Sigmoid colon (tissue), 7 donors: ENCODE measurements at regions of chr5 and their contacts with region 1.

Region 1: GRCh38 chr5:116507051-116507537 is 67.5 kb downstream of the SEMA6A start:
- DNase-seq: peak; percentile 80
- H3K4me3 ChIP-seq: no peak overlapping the region
- H3K27ac ChIP-seq: peak overlapping the region; percentile 29 to 77 (median 57)
- H3K4me1 ChIP-seq: peaks cover 0 to 98% (median 85%) of the 10 kb centered on the region in 4 donors
- H3K27me3 ChIP-seq: no peaks in the 10 kb centered on the region
- CTCF ChIP-seq: no peak
- EP300 ChIP-seq: peak; percentile 38 to 79 (median 56)
- POLR2A ChIP-seq: no peak

Region 2: DNA sequence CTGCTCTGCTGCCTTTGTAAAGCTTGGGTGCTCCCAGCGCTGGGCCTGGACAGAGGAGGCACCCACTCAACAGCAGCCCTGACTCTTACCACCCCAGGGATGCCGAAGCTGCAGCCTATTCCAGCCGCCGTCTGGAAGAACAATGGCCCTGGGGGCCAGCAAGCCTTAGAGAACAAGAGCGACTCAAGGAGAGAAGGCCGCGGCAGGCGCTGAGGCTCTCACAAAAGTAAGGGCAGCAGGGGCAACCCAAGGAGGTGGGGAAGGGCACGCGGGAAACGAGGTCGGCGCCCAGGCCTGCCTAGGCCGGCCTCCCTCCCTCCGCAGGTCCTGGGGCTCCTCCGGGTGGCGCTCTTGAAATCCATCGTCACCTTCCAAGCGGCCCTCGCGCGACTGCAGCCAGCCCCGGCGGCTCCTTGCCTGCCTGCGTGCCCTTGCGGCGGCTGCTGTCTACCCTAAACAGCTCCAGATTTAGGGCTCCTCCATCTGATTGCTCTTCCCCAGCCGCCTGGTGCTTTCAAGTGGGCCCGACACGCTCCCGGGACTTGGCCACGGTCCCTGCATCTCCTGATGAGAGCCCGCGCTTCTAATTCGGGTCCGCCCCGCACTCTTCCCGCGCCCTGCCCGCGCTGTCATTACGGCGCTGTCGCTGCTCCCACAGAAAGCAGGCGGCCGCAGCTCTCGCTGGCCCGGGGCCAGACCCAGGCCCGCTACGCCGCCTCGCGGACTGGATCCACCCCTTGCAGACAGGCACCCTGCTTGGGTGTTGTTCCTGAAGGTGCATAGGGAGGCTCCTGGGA is 145.7 kb before region 1 on chr5:
- intact Hi-C with region 1: loop called (anchors 5 kb)
- DNase-seq: peak; percentile 84
- H3K4me3 ChIP-seq: peak overlapping the region; percentile 30 to 52 (median 47)
- H3K27ac ChIP-seq: peak overlapping the region; percentile 31 to 77 (median 74)
- H3K4me1 ChIP-seq: peaks cover 0 to 42% (median 30%) of the 10 kb centered on the region in 4 donors
- H3K27me3 ChIP-seq: no peaks in the 10 kb centered on the region
- CTCF ChIP-seq: peak in 3 of 4 experiments; percentile 22 to 40 (median 38)
- EP300 ChIP-seq: no peak
- POLR2A ChIP-seq: no peak

Region 3: DNA sequence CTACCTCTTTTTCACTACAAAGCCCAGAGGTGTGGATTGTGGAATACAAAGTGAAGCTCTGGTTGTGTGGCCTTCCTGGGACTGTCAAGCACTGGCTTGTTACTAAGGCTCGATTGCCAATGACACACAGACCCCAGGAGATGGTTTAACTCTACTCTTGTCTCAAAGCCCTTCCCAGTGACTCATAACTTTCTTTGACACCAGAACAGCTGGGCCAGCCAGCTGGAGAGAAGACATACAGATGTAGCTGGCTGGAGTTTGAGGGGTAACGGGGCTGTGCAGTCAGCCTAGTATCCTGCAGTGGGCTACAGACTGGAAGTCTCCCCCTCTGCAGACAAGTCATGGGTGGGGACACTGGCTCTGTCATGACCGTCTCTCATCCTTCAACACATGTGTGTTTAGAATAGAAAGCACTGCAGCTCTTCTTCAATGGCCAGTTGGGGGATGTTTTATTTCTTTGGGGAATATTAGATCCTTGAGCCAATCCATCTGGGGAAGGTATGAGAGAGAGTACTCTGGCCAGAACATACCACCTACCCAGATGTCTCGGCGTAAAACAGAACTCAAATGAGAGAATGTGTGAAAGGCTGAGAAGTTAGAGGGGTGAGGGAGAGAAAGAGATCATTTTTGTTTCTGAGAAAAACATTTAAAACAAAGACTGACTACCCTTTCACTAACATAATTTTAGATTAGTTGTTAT is 14.2 kb after region 1 on chr5:
- intact Hi-C with region 1: loop called (anchors 2 kb)
- DNase-seq: no peak
- H3K4me3 ChIP-seq: no peak overlapping the region
- H3K27ac ChIP-seq: peak overlapping the region in 2 of 4 donors; percentile 3 to 12
- H3K4me1 ChIP-seq: peaks cover 0 to 93% (median 55%) of the 10 kb centered on the region in 4 donors
- H3K27me3 ChIP-seq: no peaks in the 10 kb centered on the region
- CTCF ChIP-seq: no peak
- EP300 ChIP-seq: no peak
- POLR2A ChIP-seq: no peak

Region 4: GRCh38 chr5:116702776-116703175 is 195.7 kb after region 1 on chr5:
- intact Hi-C with region 1: no loop called
- DNase-seq: no peak
- H3K4me3 ChIP-seq: no peak overlapping the region
- H3K27ac ChIP-seq: no peak overlapping the region
- H3K4me1 ChIP-seq: no peaks in the 10 kb centered on the region
- H3K27me3 ChIP-seq: no peaks in the 10 kb centered on the region
- CTCF ChIP-seq: no peak
- EP300 ChIP-seq: no peak
- POLR2A ChIP-seq: no peak